ENCODE measurements at regions of chr6 and their contacts with region 1.

Region 1: DNA sequence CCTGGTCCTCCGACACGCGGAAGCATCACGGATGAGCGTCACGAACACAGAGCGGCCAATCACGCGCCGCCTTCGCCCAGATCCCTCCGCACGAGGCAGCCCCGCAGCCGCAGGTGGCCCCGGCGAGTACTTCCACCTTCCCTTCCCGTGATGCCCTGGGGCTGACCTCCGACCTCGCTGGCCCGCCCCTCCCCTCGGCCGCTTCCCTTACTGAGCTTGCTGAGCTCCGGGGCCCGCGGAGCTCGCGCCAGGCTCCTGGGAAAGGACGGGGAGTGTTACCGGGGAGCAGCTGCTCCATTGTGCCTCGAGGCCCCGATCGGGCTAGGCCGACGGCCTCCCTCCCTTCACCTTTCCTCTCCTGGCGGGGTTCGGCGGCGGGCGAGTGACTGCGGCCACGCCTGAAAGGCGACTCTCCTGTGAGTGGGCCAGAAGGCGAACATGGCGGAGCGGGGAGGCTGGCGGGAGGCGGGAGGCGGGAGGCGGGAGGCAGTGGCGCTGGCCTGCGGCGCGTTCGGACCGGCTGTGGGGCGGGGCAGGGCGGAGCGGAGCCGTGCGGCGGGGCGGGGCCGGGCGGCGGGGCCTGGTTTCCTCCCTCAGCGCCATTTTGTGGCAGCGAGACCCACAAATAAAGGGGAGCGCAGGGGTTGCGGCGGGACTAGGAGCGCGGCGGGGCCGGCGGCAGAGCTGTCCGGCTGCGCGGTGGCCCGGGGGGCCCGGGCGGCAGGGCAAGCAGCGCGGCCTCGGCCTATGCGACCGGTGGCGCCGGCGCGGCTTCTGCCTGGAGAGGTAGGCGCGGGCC is at the start of gene WTAP:
- DNase-seq: peak; percentile 93 to 99 (median 96)
- ATAC-seq: peak; percentile 85 to 91 (median 86)
- H3K4me3 ChIP-seq: peak within 1 kb of the TSS; percentile 91 to 93
- H3K4me3 Mint-ChIP-seq: peak within 1 kb of the TSS; percentile 95 to 96 (median 96)
- H3K27ac ChIP-seq: peak within 1 kb of the TSS; percentile 95
- H3K27ac Mint-ChIP-seq: peak within 1 kb of the TSS; percentile 99
- H3K4me1 ChIP-seq: peaks cover 22 to 35% of the 10 kb centered on the region in 2 experiments
- H3K4me1 Mint-ChIP-seq: peaks cover 69 to 71% (median 69%) of the 10 kb centered on the region in 3 donors
- H3K27me3 ChIP-seq: no peaks in the 10 kb centered on the region
- H3K27me3 Mint-ChIP-seq: no peaks in the 10 kb centered on the region
- total RNA-seq, gene WTAP: 119 to 177 (median 126) TPM

Region 2: GRCh38 chr6:159790149-159790955 is 63.2 kb after region 1 on chr6 and contains the start of gene MRPL18:
- CTCF ChIA-PET with region 1: interaction called, 3 to 11 read pairs
- POLR2A ChIA-PET with region 1: interaction called, 14 to 24 read pairs
- DNase-seq: peak; percentile 69 to 94 (median 86)
- ATAC-seq: peak; percentile 84 to 88 (median 86)
- H3K4me3 ChIP-seq: peak within 1 kb of the TSS; percentile 96
- H3K4me3 Mint-ChIP-seq: peak within 1 kb of the TSS; percentile 96 to 99 (median 98)
- H3K27ac ChIP-seq: peak within 1 kb of the TSS; percentile 96
- H3K27ac Mint-ChIP-seq: peak within 1 kb of the TSS; percentile 97 to 99
- H3K4me1 ChIP-seq: peaks cover 25 to 31% of the 10 kb centered on the region in 2 experiments
- H3K4me1 Mint-ChIP-seq: peaks cover 58 to 69% (median 63%) of the 10 kb centered on the region in 3 donors
- H3K27me3 ChIP-seq: no peaks in the 10 kb centered on the region
- H3K27me3 Mint-ChIP-seq: no peaks in the 10 kb centered on the region
- total RNA-seq, gene MRPL18: 19.8 to 44.4 (median 36.6) TPM

Measured in T-cell (primary cell).